Activated CD4-positive, alpha-beta memory T cell treated with anti-CD3 and anti-CD28 coated beads for 36 hours (primary cell): ENCODE measurements at regions of chr4 and their contacts with region 1.

Region 1: GRCh38 chr4:12633053-12633651 is 851.0 kb downstream of the RAB28 start:
- DNase-seq: peak; percentile 82
- H3K4me3 Mint-ChIP-seq: no peak overlapping the region
- H3K27ac Mint-ChIP-seq: no peak overlapping the region
- H3K4me1 Mint-ChIP-seq: no peaks in the 10 kb centered on the region
- H3K27me3 Mint-ChIP-seq: peaks cover 12% of the 10 kb centered on the region

Region 2: GRCh38 chr4:11765849-11766453 is 867.2 kb before region 1 on chr4:
- CTCF ChIA-PET with region 1: interaction called, 23 read pairs
- POLR2A ChIA-PET with region 1: no interaction called
- intact Hi-C with region 1: loop called (anchors 1 kb)
- DNase-seq: peak; percentile 15
- H3K4me3 Mint-ChIP-seq: no peak overlapping the region
- H3K27ac Mint-ChIP-seq: no peak overlapping the region
- H3K4me1 Mint-ChIP-seq: no peaks in the 10 kb centered on the region
- H3K27me3 Mint-ChIP-seq: peaks cover 2% of the 10 kb centered on the region

Region 3: DNA sequence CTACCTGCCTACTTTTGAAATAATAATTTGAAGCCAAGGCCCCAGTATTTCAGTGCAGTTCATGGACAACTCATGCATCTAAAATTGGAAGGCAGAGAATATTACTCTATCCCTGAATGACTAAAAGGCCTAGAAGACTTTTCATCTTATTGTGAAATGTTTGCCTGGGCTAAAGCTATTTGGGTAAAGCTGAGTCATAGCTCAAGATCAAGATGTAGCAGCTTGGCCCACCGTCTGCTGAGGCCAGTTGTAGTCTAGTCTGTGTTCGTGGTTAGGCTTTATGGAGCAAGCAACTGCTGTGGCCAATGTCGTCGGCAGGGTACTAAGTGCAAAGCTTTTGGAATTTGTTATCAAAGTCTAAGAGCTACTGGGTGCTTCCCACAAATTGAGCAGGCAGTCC is 78.1 kb before region 1 on chr4:
- CTCF ChIA-PET with region 1: no interaction called
- POLR2A ChIA-PET with region 1: no interaction called
- intact Hi-C with region 1: no loop called
- DNase-seq: no peak
- H3K4me3 Mint-ChIP-seq: no peak overlapping the region
- H3K27ac Mint-ChIP-seq: no peak overlapping the region
- H3K4me1 Mint-ChIP-seq: no peaks in the 10 kb centered on the region
- H3K27me3 Mint-ChIP-seq: no peaks in the 10 kb centered on the region